ENCODE measurements at regions of chr22 and their contacts with region 1.

Region 1: GRCh38 chr22:45994491-45995404 is 17.8 kb upstream of the WNT7B start:
- DNase-seq: peak; percentile 79
- ATAC-seq: peak; percentile 51
- H3K4me3 Mint-ChIP-seq: no peak overlapping the region
- H3K27ac Mint-ChIP-seq: no peak overlapping the region
- H3K4me1 Mint-ChIP-seq: peaks cover 26% of the 10 kb centered on the region
- H3K27me3 Mint-ChIP-seq: peaks cover 2% of the 10 kb centered on the region
- CTCF ChIP-seq: peak; percentile 24

Region 2: DNA sequence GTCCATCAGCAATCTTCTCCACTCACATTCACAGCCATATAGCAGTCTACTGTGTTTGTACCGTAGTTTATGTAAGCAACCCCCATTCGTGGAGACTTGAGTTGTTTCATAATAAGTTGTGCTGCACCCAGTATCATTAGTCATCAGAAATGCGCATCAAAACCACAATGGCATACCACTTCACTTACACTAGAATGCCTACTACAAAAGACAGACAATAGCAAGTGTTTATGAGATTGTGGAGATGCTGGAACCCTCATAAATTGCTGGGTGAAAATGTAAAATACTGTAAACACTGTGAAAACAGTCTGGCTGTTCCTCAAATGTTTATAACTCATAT is 189.8 kb before region 1 on chr22:
- CTCF ChIA-PET with region 1: no interaction called
- POLR2A ChIA-PET with region 1: no interaction called
- intact Hi-C with region 1: no loop called
- DNase-seq: no peak
- ATAC-seq: no peak
- H3K4me3 Mint-ChIP-seq: no peak overlapping the region
- H3K27ac Mint-ChIP-seq: no peak overlapping the region
- H3K4me1 Mint-ChIP-seq: no peaks in the 10 kb centered on the region
- H3K27me3 Mint-ChIP-seq: no peaks in the 10 kb centered on the region
- CTCF ChIP-seq: no peak

Region 3: DNA sequence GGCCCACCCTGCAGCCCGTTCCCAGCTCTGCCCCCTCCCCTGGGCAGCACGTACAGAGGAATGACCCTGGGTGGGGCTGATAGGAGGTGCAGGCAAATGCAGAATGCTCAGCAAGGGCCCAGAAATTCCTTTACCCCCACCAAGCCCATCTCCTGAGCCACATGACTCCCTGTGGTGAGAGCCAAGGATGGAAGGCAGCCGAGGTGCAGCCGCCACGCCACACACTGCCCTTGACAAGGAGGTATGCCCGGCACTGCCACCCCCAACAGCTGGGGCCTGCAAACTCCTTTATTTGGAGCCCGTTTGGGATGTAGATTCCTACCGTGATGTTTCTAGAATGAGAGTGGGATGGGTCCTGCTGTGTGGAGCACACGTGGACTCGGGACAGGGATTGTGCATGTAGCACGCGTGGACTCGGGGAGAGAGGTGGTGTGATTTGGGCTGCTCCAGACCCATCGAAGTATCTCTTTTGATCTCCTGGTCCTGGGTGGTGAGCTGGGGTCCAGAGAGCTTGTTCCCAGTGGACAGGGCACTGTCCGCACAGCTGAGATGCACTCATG is 314.9 kb after region 1 on chr22:
- CTCF ChIA-PET with region 1: no interaction called
- POLR2A ChIA-PET with region 1: no interaction called
- intact Hi-C with region 1: loop called (anchors 5 kb)
- DNase-seq: no peak
- ATAC-seq: no peak
- H3K4me3 Mint-ChIP-seq: no peak overlapping the region
- H3K27ac Mint-ChIP-seq: no peak overlapping the region
- H3K4me1 Mint-ChIP-seq: no peaks in the 10 kb centered on the region
- H3K27me3 Mint-ChIP-seq: no peaks in the 10 kb centered on the region
- CTCF ChIP-seq: no peak

Measured in activated B cell treated with CpG ODN at 0.5 μM for 24 hours (primary cell).